Vagina (tissue), 2 donors: ENCODE measurements at regions of chr9 and their contacts with region 1.

Region 1: GRCh38 chr9:118992813-118993794 is 376.1 kb downstream of the BRINP1 start:
- DNase-seq: no peak
- H3K4me3 ChIP-seq: no peak overlapping the region
- H3K27ac ChIP-seq: no peak overlapping the region
- H3K4me1 ChIP-seq: no peaks in the 10 kb centered on the region
- H3K27me3 ChIP-seq: no peaks in the 10 kb centered on the region
- CTCF ChIP-seq: no peak
- POLR2A ChIP-seq: no peak

Region 2: GRCh38 chr9:118918180-118918579 is 74.9 kb before region 1 on chr9:
- intact Hi-C with region 1: no loop called
- DNase-seq: no peak
- H3K4me3 ChIP-seq: no peak overlapping the region
- H3K27ac ChIP-seq: no peak overlapping the region
- H3K4me1 ChIP-seq: no peaks in the 10 kb centered on the region
- H3K27me3 ChIP-seq: no peaks in the 10 kb centered on the region
- CTCF ChIP-seq: no peak
- POLR2A ChIP-seq: no peak

Region 3: GRCh38 chr9:119033596-119033995 is 40.5 kb after region 1 on chr9:
- intact Hi-C with region 1: loop called (anchors 1 kb)
- DNase-seq: no peak
- H3K4me3 ChIP-seq: no peak overlapping the region
- H3K27ac ChIP-seq: no peak overlapping the region
- H3K4me1 ChIP-seq: no peaks in the 10 kb centered on the region
- H3K27me3 ChIP-seq: no peaks in the 10 kb centered on the region
- CTCF ChIP-seq: no peak
- POLR2A ChIP-seq: no peak

Region 4: DNA sequence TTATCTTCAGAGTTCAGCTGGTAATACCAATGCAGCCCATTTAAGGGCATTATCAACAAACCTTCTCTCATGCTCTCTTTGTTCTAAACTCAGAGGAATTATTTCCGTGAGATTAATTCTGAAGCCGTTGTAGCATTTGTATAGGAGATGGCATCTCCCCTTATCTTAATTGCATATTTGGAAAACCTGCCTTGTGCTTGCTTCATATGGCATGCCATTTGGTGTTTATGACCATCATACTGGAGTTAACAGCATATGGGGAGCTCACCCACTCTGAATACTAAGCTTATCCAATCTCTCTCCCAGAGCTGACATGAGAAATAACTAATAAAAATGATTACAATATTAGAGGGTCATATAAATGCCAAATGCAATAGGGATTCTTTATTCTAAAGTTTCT is 132.9 kb after region 1 on chr9:
- intact Hi-C with region 1: no loop called
- DNase-seq: no peak
- H3K4me3 ChIP-seq: no peak overlapping the region
- H3K27ac ChIP-seq: no peak overlapping the region
- H3K4me1 ChIP-seq: no peaks in the 10 kb centered on the region
- H3K27me3 ChIP-seq: no peaks in the 10 kb centered on the region
- CTCF ChIP-seq: no peak
- POLR2A ChIP-seq: no peak

Region 5: DNA sequence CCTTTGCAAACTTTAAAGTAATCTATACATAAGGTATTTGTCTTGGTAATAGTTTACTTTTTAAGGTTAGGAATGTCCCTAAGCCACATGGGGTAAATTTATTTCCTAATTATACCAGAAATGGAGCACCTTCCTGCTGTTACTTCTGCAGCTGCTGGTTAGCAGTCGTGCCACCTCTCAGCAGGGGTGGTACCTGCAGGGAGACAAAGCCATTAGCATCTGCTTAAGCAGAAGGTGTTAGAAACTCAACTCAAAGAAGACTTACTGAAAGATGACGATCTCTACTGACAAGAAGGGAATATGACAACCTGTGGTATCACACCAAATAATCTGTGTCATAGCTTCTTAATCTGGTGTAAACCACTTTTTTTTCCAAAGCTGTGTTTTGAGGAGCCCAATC is 202.4 kb after region 1 on chr9:
- intact Hi-C with region 1: no loop called
- DNase-seq: no peak
- H3K4me3 ChIP-seq: no peak overlapping the region
- H3K27ac ChIP-seq: no peak overlapping the region
- H3K4me1 ChIP-seq: no peaks in the 10 kb centered on the region
- H3K27me3 ChIP-seq: no peaks in the 10 kb centered on the region
- CTCF ChIP-seq: no peak
- POLR2A ChIP-seq: no peak